Breast epithelium (tissue), 4 donors: ENCODE measurements at regions of chr17 and their contacts with region 1.

Region 1: GRCh38 chr17:50087246-50087911 is 7.8 kb upstream of the PDK2 start:
- DNase-seq: peak in 1 of 2 donors; percentile 64
- H3K4me3 ChIP-seq: no peak overlapping the region
- H3K27ac ChIP-seq: no peak overlapping the region
- H3K4me1 ChIP-seq: no peaks in the 10 kb centered on the region
- H3K27me3 ChIP-seq: no peaks in the 10 kb centered on the region
- CTCF ChIP-seq: peak; percentile 83 to 94 (median 93)
- POLR2A ChIP-seq: no peak

Region 2: GRCh38 chr17:50047488-50048126 is 39.8 kb before region 1 on chr17:
- intact Hi-C with region 1: no loop called
- DNase-seq: no peak
- H3K4me3 ChIP-seq: no peak overlapping the region
- H3K27ac ChIP-seq: peak overlapping the region in 1 of 2 donors; percentile 34
- H3K4me1 ChIP-seq: peaks cover 0 to 4% of the 10 kb centered on the region in 2 donors
- H3K27me3 ChIP-seq: no peaks in the 10 kb centered on the region
- CTCF ChIP-seq: no peak
- POLR2A ChIP-seq: no peak

Region 3: DNA sequence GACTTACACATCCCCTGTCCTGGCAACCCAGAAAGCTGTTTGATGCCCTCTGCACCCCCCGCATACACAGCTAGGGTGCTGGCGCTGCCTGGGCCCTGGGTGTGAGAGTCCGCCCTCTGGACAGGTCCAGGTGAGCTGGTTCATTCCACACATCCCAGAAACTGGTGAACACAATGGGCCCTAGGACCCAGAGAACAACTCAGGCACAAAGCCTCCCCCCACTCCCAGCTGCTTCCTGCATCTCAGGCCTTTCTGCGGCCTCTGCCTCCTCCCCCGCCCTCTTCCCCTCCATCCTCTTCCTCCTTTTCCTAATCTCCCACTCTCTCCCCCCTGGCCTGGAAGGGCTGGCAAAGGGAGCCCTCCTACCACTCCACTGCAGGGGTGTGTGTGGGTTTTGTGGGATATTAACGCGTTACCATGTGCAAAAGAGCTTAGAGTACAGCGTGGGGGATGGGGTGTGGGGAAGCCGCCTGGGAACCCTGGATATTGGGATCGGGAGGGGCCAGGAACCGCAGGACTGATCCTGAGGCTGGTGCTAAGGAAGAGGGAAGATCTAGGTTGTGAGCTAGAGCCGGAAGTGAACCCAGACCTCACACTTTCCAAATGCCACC is 64.7 kb after region 1 on chr17:
- intact Hi-C with region 1: loop called (anchors 2 kb)
- DNase-seq: peak in 1 of 2 donors; percentile 81
- H3K4me3 ChIP-seq: peak overlapping the region; percentile 81 to 90 (median 85)
- H3K27ac ChIP-seq: peak overlapping the region; percentile 88 to 94
- H3K4me1 ChIP-seq: peaks cover 10 to 40% of the 10 kb centered on the region in 2 donors
- H3K27me3 ChIP-seq: no peaks in the 10 kb centered on the region
- CTCF ChIP-seq: no peak
- POLR2A ChIP-seq: no peak